PC-9 (cell line): ENCODE measurements at regions of chr17 and their contacts with region 1.

Region 1: GRCh38 chr17:34199932-34200534 is 55.1 kb upstream of the CCL2 start:
- DNase-seq: peak; percentile 50 to 60
- H3K4me3 ChIP-seq: no peak overlapping the region
- H3K27ac ChIP-seq: no peak overlapping the region
- H3K4me1 ChIP-seq: no peaks in the 10 kb centered on the region
- H3K27me3 ChIP-seq: peaks cover 9% of the 10 kb centered on the region
- CTCF ChIP-seq: peak; percentile 98

Region 2: GRCh38 chr17:34081269-34081668 is 118.8 kb before region 1 on chr17:
- CTCF ChIA-PET with region 1: no interaction called
- POLR2A ChIA-PET with region 1: no interaction called
- intact Hi-C with region 1: no loop called
- DNase-seq: no peak
- H3K4me3 ChIP-seq: no peak overlapping the region
- H3K27ac ChIP-seq: no peak overlapping the region
- H3K4me1 ChIP-seq: no peaks in the 10 kb centered on the region
- H3K27me3 ChIP-seq: peaks cover 5% of the 10 kb centered on the region; the same call in 1 of the 2 replicates
- CTCF ChIP-seq: peak; percentile 61

Region 3: DNA sequence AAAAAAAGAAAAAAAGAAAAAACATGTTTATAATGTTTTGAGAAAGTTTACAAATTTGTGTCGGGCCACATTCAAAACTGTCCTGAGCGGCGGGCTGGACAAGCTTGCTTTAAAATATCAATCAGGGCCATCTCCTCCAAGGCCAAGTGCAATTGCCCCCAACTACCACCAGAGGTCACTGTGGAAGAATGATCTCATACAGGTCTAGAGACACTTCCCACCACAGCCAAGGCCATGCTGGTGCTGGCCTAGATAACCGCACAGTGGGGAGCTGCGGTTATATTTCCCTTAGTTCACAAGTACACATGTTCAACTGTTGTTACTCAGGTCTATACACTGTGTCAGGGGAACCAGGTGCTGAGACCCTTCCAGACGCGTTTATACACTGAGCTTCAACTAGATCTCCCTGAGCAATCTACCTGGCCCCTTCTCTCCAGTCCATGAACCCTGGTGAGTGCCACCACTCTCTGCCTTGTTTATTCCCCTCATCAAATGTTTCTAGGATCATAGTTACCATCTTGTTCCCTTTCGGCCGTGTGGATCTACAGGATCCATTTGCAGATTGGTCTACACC is 28.7 kb before region 1 on chr17:
- CTCF ChIA-PET with region 1: no interaction called
- POLR2A ChIA-PET with region 1: no interaction called
- intact Hi-C with region 1: no loop called
- DNase-seq: peak; percentile 36 to 41
- H3K4me3 ChIP-seq: no peak overlapping the region
- H3K27ac ChIP-seq: no peak overlapping the region
- H3K4me1 ChIP-seq: no peaks in the 10 kb centered on the region
- H3K27me3 ChIP-seq: 0 out of 2 replicates have a peak, but pooled peaks cover 3% of the 10 kb centered on the region
- CTCF ChIP-seq: peak; percentile 92

Region 4: DNA sequence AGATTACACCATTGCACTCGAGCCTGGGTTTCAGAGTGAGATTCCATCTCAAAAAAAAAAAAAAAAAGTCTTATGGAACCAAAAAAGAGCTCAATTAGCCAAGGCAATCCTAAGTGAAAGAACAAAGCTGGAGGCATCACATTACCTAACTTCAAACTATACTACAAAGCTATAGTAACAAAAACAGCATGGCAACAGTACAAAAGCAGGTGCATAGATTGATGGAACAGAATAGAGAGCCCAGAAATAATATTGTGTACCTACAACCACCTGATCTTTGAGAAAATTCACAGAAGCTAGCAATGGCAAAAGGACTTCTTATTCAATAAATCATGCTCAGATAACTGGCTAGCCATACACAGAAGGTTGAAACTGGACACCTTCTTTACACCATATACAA is 30.3 kb after region 1 on chr17:
- CTCF ChIA-PET with region 1: interaction called, 12 read pairs
- POLR2A ChIA-PET with region 1: no interaction called
- intact Hi-C with region 1: no loop called
- DNase-seq: no peak
- H3K4me3 ChIP-seq: no peak overlapping the region
- H3K27ac ChIP-seq: no peak overlapping the region
- H3K4me1 ChIP-seq: no peaks in the 10 kb centered on the region
- H3K27me3 ChIP-seq: no peaks in the 10 kb centered on the region
- CTCF ChIP-seq: no peak

Region 5: DNA sequence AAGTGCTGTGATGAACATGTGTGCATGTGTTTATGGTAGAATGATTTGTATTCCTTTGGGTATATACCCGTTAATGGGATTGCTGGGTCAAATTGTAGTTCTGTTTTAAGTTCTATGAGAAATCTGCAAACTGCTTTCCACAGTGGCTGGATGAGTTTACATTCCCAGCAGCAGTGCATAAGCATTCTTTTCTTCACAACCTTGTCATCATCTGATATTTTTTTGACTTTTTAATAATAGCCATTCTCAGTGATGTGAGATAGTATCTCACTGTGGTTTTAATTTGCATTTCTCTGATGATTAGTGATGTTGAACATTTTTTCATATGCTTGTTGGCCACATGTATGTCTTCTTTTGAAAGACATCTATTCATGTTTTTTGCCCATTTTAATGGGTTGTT is 137.7 kb after region 1 on chr17:
- CTCF ChIA-PET with region 1: no interaction called
- POLR2A ChIA-PET with region 1: no interaction called
- intact Hi-C with region 1: no loop called
- DNase-seq: no peak
- H3K4me3 ChIP-seq: no peak overlapping the region
- H3K27ac ChIP-seq: no peak overlapping the region
- H3K4me1 ChIP-seq: no peaks in the 10 kb centered on the region
- H3K27me3 ChIP-seq: peaks cover 5% of the 10 kb centered on the region; the same call in 1 of the 2 replicates
- CTCF ChIP-seq: no peak

Region 6: GRCh38 chr17:34361478-34362061 is 161.5 kb after region 1 on chr17:
- CTCF ChIA-PET with region 1: interaction called, 3 read pairs
- POLR2A ChIA-PET with region 1: no interaction called
- intact Hi-C with region 1: loop called (anchors 1 kb)
- DNase-seq: peak; percentile 61 to 68
- H3K4me3 ChIP-seq: no peak overlapping the region
- H3K27ac ChIP-seq: no peak overlapping the region
- H3K4me1 ChIP-seq: no peaks in the 10 kb centered on the region
- H3K27me3 ChIP-seq: no peaks in the 10 kb centered on the region
- CTCF ChIP-seq: peak; percentile 88